ENCODE measurements at regions of chr5 and their contacts with region 1.

Region 1: DNA sequence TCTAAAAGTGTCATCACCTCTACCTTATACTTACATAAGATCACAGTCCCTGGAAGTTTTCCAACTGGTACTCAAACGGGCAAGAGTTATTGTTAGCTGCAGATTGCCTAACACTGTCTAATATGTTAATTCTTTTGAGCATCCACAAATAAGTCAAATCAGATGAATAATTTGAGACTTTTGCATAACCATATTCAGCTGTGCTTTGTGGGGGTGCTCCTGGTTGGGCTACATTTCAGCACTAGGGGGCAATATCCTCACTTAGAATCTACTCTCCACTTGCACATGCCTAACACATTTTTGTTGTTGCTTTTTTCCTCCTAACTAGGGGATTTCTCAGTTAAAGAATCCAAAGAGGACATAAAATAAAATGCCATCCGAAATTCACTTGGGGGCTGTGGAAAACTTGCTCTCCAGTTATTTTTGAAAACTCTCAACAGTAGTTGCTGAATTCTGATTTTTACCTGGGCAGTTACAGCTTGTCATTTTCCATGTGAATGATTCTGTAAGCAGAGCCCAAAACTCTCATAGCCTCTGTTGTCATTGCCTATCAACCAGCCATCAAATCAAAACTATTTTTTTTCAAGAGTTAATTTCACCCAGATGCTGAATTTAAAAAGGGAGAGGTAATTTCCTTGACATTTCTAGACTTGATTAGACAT is 71.5 kb downstream of the TRIM36 start:
- DNase-seq: peak; percentile 60
- H3K4me3 ChIP-seq: no peak overlapping the region
- H3K27ac ChIP-seq: no peak overlapping the region
- H3K4me1 ChIP-seq: no peaks in the 10 kb centered on the region
- CTCF ChIP-seq: peak; percentile 92

Region 2: DNA sequence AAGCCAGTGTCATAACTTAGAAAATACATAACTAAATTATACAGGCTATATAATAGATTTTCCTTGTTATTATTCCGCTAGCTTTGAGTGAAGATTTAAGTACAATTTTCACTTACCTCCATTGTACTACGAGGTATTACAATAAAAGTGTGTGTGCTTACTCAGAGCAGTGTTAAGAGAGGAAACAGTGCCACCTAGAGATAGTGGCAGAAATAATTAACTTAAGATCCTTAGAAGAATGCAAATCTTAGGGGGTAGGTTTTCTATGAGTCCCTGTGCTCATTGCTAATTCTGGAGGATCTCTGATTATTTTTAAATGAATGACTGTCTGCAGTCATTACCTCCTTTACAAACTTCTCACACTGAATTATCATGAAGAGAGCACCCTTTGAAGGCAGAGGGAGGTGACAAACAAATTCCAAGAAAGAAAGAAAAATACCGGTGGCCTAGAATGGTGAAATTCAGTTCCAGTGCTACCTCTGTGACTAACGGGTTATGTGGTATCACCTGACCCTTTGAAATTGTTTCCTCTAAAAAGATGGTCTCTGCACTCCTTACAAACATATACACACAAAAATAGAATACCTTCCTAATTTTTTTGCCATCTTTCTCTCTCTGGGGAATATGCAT is 308.3 kb before region 1 on chr5:
- CTCF ChIA-PET with region 1: no interaction called
- POLR2A ChIA-PET with region 1: no interaction called
- intact Hi-C with region 1: no loop called
- DNase-seq: peak; percentile 32
- H3K4me3 ChIP-seq: no peak overlapping the region
- H3K27ac ChIP-seq: no peak overlapping the region
- H3K4me1 ChIP-seq: no peaks in the 10 kb centered on the region
- CTCF ChIP-seq: peak; percentile 81

Region 3: DNA sequence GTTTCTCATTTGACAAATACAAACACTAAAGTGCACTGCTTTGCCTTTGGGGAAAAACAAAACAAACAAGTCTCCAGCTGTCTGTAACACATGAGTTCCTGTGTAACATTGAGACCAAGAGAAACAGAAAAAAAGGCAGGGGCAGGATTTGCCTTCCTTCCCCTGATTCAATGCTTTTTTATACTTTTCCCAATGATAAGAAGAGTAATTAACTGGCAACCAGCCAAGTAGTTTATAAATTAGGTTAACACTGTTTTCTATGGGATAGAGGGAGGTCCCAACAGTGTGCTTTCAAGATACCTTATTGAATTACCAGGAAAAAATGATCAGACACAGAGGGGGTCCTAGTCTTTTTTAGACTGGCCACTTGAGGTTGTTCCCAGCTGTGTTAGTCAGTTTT is 275.3 kb before region 1 on chr5:
- CTCF ChIA-PET with region 1: no interaction called
- POLR2A ChIA-PET with region 1: no interaction called
- intact Hi-C with region 1: no loop called
- DNase-seq: no peak
- H3K4me3 ChIP-seq: no peak overlapping the region
- H3K27ac ChIP-seq: no peak overlapping the region
- H3K4me1 ChIP-seq: no peaks in the 10 kb centered on the region
- CTCF ChIP-seq: no peak

Region 4: GRCh38 chr5:115151208-115151805 is 53.1 kb after region 1 on chr5:
- CTCF ChIA-PET with region 1: no interaction called
- POLR2A ChIA-PET with region 1: no interaction called
- intact Hi-C with region 1: no loop called
- DNase-seq: no peak
- H3K4me3 ChIP-seq: no peak overlapping the region
- H3K27ac ChIP-seq: no peak overlapping the region
- H3K4me1 ChIP-seq: no peaks in the 10 kb centered on the region
- CTCF ChIP-seq: no peak

Region 5: GRCh38 chr5:115246361-115246991 is 148.3 kb after region 1 on chr5:
- CTCF ChIA-PET with region 1: interaction called, 5 read pairs
- POLR2A ChIA-PET with region 1: interaction called, 5 read pairs
- intact Hi-C with region 1: loop called (anchors 1 kb)
- DNase-seq: peak; percentile 61
- H3K4me3 ChIP-seq: no peak overlapping the region
- H3K27ac ChIP-seq: no peak overlapping the region
- H3K4me1 ChIP-seq: no peaks in the 10 kb centered on the region
- CTCF ChIP-seq: peak; percentile 91

Region 6: DNA sequence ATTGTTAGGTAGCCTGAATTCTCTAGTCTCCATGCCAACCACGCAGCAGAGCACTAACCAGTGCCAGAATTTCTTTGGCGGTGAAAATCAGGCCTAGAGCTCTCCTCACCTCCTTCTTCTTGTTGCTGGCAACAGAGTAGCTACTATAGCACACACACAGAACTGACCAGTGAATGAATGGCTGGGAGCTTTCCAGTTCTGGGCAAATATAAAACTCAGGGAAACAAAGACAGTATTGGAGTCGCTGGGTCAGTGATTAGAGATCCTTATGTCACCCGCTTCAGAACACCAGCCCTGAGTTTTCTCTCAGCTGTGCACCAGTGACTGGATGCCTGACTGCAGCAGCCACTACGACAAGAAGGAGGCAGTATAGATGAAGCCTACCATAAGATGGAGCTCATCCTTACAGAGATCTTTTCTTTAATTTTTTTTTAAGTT is 473.3 kb after region 1 on chr5:
- CTCF ChIA-PET with region 1: no interaction called
- POLR2A ChIA-PET with region 1: interaction called, 4 read pairs
- intact Hi-C with region 1: loop called (anchors 5 kb)
- DNase-seq: no peak
- H3K4me3 ChIP-seq: no peak overlapping the region
- H3K27ac ChIP-seq: no peak overlapping the region
- H3K4me1 ChIP-seq: no peaks in the 10 kb centered on the region
- CTCF ChIP-seq: no peak

Measured in OCI-LY7 (cell line).